CD14-positive monocyte (primary cell): ENCODE measurements at regions of chr9 and their contacts with region 1.

Region 1: GRCh38 chr9:37465249-37466036 is at the start of gene ZBTB5:
- DNase-seq: peak; percentile 99
- H3K4me3 ChIP-seq: peak within 1 kb of the TSS; percentile 89 to 92 (median 91)
- H3K4me3 Mint-ChIP-seq: peak within 1 kb of the TSS; percentile 95
- H3K27ac ChIP-seq: peak within 1 kb of the TSS; percentile 92 to 95
- H3K27ac Mint-ChIP-seq: peak within 1 kb of the TSS; percentile 96 to 98 (median 98)
- H3K4me1 ChIP-seq: peaks cover 15 to 24% of the 10 kb centered on the region in 2 donors
- H3K4me1 Mint-ChIP-seq: peaks cover 27% of the 10 kb centered on the region
- H3K27me3 ChIP-seq: no peaks in the 10 kb centered on the region
- H3K27me3 Mint-ChIP-seq: peaks cover under 1 to 3% (median 2%) of the 10 kb centered on the region in 3 donors
- CTCF ChIP-seq: no peak
- polyA plus RNA-seq, gene ZBTB5: 0.58 to 6.4 (median 1.4) TPM

Region 2: GRCh38 chr9:36400332-36401163 is 1064.9 kb before region 1 on chr9:
- intact Hi-C with region 1: loop called in 1 of 2 experiments (anchors 5 kb)
- DNase-seq: peak; percentile 81 to 86 (median 85)
- H3K4me3 ChIP-seq: peak overlapping the region; percentile 66 to 91 (median 84)
- H3K4me3 Mint-ChIP-seq: peak overlapping the region; percentile 90 to 91
- H3K27ac ChIP-seq: peak overlapping the region; percentile 75 to 91
- H3K27ac Mint-ChIP-seq: peak overlapping the region; percentile 88 to 97 (median 96)
- H3K4me1 ChIP-seq: peaks cover 24 to 25% of the 10 kb centered on the region in 2 donors
- H3K4me1 Mint-ChIP-seq: peaks cover 34% of the 10 kb centered on the region
- H3K27me3 ChIP-seq: no peaks in the 10 kb centered on the region
- H3K27me3 Mint-ChIP-seq: no peaks in the 10 kb centered on the region
- CTCF ChIP-seq: no peak

Region 3: GRCh38 chr9:37422289-37423104 is 42.9 kb before region 1 on chr9 and contains the start of gene GRHPR:
- intact Hi-C with region 1: loop called in 1 of 2 experiments (anchors 5 kb)
- DNase-seq: peak; percentile 87 to 89 (median 87)
- H3K4me3 ChIP-seq: peak within 1 kb of the TSS; percentile 72 to 77 (median 72)
- H3K4me3 Mint-ChIP-seq: peak within 1 kb of the TSS; percentile 94 to 95
- H3K27ac ChIP-seq: peak within 1 kb of the TSS; percentile 81 to 92
- H3K27ac Mint-ChIP-seq: peak within 1 kb of the TSS; percentile 91 to 98 (median 97)
- H3K4me1 ChIP-seq: peaks cover 19 to 20% of the 10 kb centered on the region in 2 donors
- H3K4me1 Mint-ChIP-seq: peaks cover 19% of the 10 kb centered on the region
- H3K27me3 ChIP-seq: no peaks in the 10 kb centered on the region
- H3K27me3 Mint-ChIP-seq: peaks cover 0 to 4% (median 2%) of the 10 kb centered on the region in 3 donors
- CTCF ChIP-seq: no peak
- polyA plus RNA-seq, gene GRHPR: 73.8 to 96.6 (median 80.9) TPM

Region 4: GRCh38 chr9:37485389-37486219 is 20.2 kb after region 1 on chr9 and contains the start of gene POLR1E:
- intact Hi-C with region 1: loop called (anchors 2 kb)
- DNase-seq: peak; percentile 91 to 94 (median 93)
- H3K4me3 ChIP-seq: peak within 1 kb of the TSS; percentile 66 to 85 (median 75)
- H3K4me3 Mint-ChIP-seq: peak within 1 kb of the TSS; percentile 88 to 93
- H3K27ac ChIP-seq: peak within 1 kb of the TSS in 1 of 2 donors; percentile 56
- H3K27ac Mint-ChIP-seq: peak within 1 kb of the TSS; percentile 57 to 92 (median 74)
- H3K4me1 ChIP-seq: peaks cover 15 to 24% of the 10 kb centered on the region in 2 donors
- H3K4me1 Mint-ChIP-seq: peaks cover 23% of the 10 kb centered on the region
- H3K27me3 ChIP-seq: peaks cover 0 to 2% of the 10 kb centered on the region in 2 donors
- H3K27me3 Mint-ChIP-seq: peaks cover 4 to 10% (median 6%) of the 10 kb centered on the region in 3 donors
- CTCF ChIP-seq: no peak
- polyA plus RNA-seq, gene POLR1E: 2.3 to 4.1 (median 2.4) TPM

Region 5: DNA sequence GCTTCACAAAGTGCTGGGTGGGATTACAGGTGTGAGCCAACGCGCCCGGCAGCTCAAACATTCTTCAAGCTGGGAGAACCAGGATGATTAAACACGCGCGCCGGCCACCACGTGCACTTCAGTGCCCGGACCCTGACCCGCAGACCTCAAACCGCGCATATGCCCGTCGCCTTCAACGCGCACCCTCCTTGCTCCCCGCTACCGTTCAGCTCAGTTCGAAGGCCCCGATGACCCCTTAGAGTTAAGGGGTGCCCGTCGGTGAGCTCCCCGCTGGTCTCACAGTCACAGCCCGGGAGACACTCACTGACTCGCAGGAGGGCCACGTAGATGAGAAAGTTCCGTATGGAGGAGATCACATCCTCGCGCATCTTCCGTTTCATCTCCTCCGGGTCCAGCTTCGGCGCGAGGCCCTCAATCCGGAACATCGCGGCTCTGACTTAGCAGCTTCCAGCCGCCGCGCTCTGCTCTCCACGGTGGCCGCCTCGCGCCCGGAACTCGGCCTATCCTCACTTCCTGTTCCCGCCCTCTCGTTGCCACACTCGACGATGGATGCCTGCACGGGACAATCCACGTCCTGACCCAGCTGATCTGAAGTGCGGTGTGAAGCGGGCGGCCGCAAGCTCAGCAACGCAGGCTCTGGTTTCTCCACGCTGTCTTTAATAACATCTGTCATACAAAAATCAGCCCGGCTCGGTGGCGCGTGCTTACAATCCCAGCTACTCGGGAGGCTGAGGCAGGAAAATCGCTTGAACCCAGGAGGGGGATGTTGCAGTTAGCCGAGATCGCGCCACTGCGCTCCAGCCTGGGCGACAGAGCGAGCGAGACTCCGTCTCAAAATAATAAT is 126.9 kb after region 1 on chr9 and contains the start of gene TOMM5:
- intact Hi-C with region 1: loop called (anchors 5 kb)
- DNase-seq: peak; percentile 86 to 93 (median 91)
- H3K4me3 ChIP-seq: peak within 1 kb of the TSS; percentile 63 to 94 (median 77)
- H3K4me3 Mint-ChIP-seq: peak within 1 kb of the TSS; percentile 98 to 99
- H3K27ac ChIP-seq: peak within 1 kb of the TSS; percentile 75 to 96
- H3K27ac Mint-ChIP-seq: peak within 1 kb of the TSS; percentile 94 to 98 (median 97)
- H3K4me1 ChIP-seq: peaks cover 28 to 32% of the 10 kb centered on the region in 2 donors
- H3K4me1 Mint-ChIP-seq: peaks cover 34% of the 10 kb centered on the region
- H3K27me3 ChIP-seq: peaks cover 0 to 4% of the 10 kb centered on the region in 2 donors
- H3K27me3 Mint-ChIP-seq: peaks cover 4 to 11% (median 7%) of the 10 kb centered on the region in 3 donors
- CTCF ChIP-seq: no peak
- polyA plus RNA-seq, gene TOMM5: 35.0 to 117 (median 112) TPM